Astrocyte of the cerebellum (primary cell): ENCODE measurements at regions of chr20 and their contacts with region 1.

Region 1: DNA sequence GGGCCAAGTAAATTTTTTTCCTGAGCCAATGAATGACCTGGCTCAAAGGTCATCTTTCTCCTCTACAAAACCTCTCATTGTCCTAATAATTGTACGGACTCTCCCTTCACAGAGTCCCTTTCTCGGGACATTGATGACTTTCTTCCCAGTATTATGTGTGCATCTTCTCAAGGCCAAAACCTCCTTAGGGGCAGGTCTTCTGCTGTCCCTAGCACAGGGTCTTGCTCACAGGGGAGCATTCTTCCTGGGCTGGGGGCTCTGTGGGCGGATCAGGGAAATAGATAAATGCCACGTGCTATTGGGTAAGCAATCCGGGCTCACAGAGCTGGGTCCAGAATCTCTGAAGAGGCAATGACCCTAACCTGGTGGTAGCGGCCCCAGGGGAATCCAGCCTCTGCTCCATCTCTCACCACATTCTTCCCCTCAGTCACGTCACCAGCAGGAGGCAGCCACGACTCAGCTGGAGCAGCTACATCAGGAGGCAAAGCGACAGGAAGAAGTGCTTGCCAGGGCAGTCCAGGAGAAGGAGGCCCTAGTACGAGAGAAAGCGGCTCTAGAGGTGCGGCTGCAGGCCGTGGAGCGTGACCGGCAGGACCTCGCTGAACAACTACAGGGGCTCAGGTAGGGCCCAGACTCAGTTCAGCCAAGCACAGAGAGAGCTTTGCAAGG is 23.5 kb downstream of the CEP250 start:
- DNase-seq: no peak
- H3K4me3 ChIP-seq: no peak overlapping the region
- CTCF ChIP-seq: peak; percentile 23

Region 2: DNA sequence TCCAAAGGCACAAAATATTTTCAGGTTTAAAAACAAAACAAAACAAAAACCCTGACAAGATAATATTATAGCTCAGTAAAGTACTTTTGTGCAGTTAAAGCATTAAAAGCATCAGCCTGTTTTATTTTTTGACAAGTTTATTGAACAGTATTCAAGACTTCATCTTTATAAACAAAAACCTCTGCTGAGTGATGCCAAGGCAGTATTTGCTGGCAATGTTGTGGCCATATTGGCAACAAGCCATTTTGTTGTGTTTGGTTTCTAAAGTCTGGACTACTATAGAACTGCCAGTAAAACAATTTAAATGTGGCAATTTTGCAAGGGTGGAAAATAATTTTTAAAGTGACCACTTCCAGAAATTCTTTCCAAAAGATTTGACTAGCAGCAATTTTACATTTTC is 169.9 kb after region 1 on chr20:
- in situ Hi-C with region 1: no loop called
- DNase-seq: no peak
- H3K4me3 ChIP-seq: no peak overlapping the region
- CTCF ChIP-seq: no peak

Region 3: DNA sequence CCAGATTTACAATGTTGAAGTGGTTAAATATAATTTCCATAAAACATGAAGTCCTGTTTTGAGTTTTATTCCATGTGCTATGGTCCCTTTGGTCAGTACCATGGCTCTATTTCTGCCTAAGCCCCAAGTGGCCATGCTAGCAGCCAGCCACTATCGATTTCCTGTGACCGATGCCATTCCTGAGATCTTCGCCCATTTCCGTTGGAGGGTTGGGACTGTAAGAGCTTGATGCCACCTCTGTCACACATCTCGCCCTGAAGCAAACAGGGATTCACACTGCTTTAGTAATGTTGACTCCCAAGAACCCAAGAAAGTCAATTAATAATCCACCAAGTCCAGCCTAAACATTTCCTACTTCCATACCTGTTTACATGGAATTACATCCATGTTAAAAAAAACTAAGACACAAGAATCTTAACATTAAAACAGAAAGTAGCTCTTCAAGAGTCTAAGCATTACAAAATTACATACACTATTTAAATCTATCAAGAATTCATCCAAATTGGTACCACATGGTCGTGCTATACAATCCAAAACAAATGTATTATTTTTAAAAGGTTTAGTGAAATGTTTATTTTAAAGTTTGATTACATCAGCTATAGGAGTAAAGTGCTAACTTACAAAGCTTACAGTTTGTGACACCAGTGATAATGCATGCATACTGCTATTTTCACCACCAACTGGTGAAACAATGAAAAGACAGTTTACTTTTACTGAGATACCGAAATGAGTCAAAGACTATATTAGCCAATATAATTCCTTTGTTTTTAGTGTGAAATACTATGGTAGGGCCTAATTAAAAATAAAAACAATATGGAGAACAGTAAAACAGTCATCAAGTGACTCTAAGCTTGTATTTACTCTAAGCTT is 260.6 kb after region 1 on chr20:
- in situ Hi-C with region 1: loop called (anchors 10 kb)
- DNase-seq: no peak
- H3K4me3 ChIP-seq: peak overlapping the region; percentile 97
- CTCF ChIP-seq: peak; percentile 1